PC-3 (cell line): ENCODE measurements at regions of chr12 and their contacts with region 1.

Region 1: DNA sequence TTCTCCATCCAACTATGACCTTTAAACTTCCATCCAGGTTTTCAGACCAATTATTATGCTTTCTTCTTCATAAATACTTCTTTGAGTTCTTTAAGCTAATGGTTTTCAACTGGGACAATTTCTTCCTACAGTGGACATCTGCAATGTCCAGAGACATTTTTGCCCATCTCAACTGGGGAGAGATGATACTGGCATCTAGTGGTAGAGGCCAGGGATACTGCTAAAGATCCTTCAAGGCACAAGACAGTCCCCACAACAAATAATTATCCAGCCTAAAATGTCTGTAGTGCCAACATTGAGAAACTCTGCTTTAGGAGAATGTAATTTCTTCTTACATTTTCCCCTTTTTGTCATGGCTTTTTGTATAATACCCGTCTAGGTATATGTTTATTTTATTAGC is 10.6 kb downstream of the TRHDE start:
- DNase-seq: peak; percentile 66
- ATAC-seq: peak; percentile 76
- H3K4me3 ChIP-seq: no peak overlapping the region
- H3K27ac ChIP-seq: no peak overlapping the region
- H3K4me1 ChIP-seq: peaks cover 47% of the 10 kb centered on the region
- H3K27me3 ChIP-seq: no peaks in the 10 kb centered on the region
- CTCF ChIP-seq: peak; percentile 86

Region 2: DNA sequence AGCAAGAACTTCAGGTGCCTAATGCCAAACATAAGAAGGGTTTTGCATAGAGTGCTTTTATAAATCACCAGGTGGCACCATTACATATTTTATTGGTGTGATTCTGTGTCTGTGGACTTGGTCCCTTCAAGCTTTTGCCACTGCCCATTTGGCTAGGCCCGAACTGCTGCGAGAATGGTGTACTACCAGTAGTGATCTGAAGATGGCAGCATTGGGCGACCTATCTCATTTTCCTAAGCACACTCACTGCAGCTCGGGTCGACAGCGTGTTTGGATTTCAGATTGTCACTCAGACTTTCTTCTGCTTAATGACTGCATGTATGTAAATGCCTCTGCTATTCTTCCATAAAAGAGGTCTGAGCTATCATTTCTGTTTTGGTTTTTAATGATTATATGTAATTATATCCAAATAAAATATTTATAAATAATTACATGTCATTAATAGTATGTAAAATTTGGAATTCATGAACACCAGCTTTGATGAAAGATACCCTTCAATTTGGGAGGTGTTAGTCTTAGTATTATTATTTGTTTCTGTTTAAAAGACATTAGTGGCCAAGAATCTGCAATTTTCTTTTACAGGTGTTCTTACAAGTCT is 265.6 kb before region 1 on chr12:
- CTCF ChIA-PET with region 1: interaction called, 5 read pairs
- POLR2A ChIA-PET with region 1: no interaction called
- intact Hi-C with region 1: loop called (anchors 1 kb)
- DNase-seq: peak; percentile 87
- ATAC-seq: peak; percentile 99
- H3K4me3 ChIP-seq: no peak overlapping the region
- H3K27ac ChIP-seq: no peak overlapping the region
- H3K4me1 ChIP-seq: no peaks in the 10 kb centered on the region
- H3K27me3 ChIP-seq: no peaks in the 10 kb centered on the region
- CTCF ChIP-seq: peak; percentile 86

Region 3: GRCh38 chr12:72296389-72296788 is 13.7 kb after region 1 on chr12:
- CTCF ChIA-PET with region 1: no interaction called
- POLR2A ChIA-PET with region 1: no interaction called
- intact Hi-C with region 1: loop called (anchors 2 kb)
- DNase-seq: peak; percentile 95
- ATAC-seq: peak; percentile 89
- H3K4me3 ChIP-seq: peak overlapping the region; percentile 48
- H3K27ac ChIP-seq: peak overlapping the region; percentile 98
- H3K4me1 ChIP-seq: peaks cover 44% of the 10 kb centered on the region
- H3K27me3 ChIP-seq: no peaks in the 10 kb centered on the region
- CTCF ChIP-seq: no peak

Region 4: DNA sequence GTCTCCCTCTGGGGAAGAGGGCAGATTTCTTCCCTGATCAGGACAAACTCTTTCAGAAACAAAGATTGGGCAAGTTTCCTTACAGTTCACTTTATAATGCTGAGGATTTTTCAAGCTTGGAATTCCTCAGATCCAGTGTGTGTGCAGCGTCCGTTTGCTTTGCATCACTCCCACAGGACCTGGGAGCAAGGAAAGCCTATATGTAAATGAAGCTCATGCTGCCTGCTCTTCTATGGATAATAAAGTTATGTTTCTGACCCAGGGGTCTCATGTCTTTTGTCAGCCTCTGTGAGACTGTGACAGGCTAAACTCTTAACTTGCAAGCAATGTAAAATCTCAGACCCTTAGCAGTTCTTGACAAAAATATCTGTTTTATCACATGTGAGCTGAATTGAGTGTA is 31.1 kb after region 1 on chr12:
- CTCF ChIA-PET with region 1: no interaction called
- POLR2A ChIA-PET with region 1: no interaction called
- intact Hi-C with region 1: no loop called
- DNase-seq: no peak
- ATAC-seq: peak; percentile 56
- H3K4me3 ChIP-seq: no peak overlapping the region
- H3K27ac ChIP-seq: no peak overlapping the region
- H3K4me1 ChIP-seq: peaks cover 7% of the 10 kb centered on the region
- H3K27me3 ChIP-seq: no peaks in the 10 kb centered on the region
- CTCF ChIP-seq: no peak

Region 5: DNA sequence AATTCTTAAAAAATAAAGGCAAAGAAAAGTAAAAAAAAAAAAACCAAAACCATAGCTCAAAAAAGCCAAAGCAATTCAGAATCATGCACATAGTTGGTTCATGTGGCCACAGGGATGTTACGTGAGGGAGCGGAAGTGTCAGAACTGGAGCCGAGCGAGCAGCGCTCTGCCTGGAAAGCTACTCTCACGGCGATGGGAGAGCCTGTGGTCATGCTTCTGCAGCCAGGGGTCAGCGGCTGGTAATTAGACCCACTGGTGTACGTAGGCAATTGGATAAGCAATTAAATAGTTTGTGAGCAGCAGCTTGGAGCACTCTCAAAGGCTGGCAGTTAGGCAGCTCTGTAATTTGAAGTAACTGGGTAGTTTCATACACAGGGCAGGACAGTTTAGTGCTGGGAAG is 47.6 kb after region 1 on chr12:
- CTCF ChIA-PET with region 1: no interaction called
- POLR2A ChIA-PET with region 1: no interaction called
- intact Hi-C with region 1: no loop called
- DNase-seq: no peak
- ATAC-seq: no peak
- H3K4me3 ChIP-seq: no peak overlapping the region
- H3K27ac ChIP-seq: no peak overlapping the region
- H3K4me1 ChIP-seq: 0 out of 2 replicates have a peak, but pooled peaks cover 6% of the 10 kb centered on the region
- H3K27me3 ChIP-seq: no peaks in the 10 kb centered on the region
- CTCF ChIP-seq: no peak